RWPE1 (cell line): ENCODE measurements at regions of chr6 and their contacts with region 1.

Region 1: GRCh38 chr6:42043787-42044475 is 6.4 kb upstream of the TAF8 start:
- DNase-seq: peak; percentile 86
- H3K27ac ChIP-seq: peak overlapping the region; percentile 98
- CTCF ChIP-seq: peak; percentile 90

Region 2: DNA sequence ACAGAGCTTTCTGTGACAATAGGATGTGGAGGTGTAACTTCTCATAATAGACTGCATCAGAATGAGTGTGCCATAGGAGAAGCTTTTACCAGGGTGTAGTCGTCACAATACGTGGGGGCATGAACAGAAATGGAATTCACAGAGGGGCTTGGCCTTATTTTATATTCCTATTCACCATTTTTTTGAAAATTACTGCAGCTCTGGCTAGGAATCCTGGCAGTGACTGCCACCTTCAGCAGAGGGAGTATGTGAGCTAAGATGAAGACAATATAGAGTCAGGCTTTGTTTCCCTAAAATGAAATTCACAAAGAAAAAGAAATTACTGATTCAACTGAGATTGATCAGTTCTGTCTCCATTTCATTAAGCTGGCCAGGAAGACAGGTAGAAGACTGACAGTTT is 242.6 kb before region 1 on chr6:
- CTCF ChIA-PET with region 1: interaction called, 14 read pairs
- POLR2A ChIA-PET with region 1: no interaction called
- DNase-seq: no peak
- H3K27ac ChIP-seq: no peak overlapping the region
- CTCF ChIP-seq: peak; percentile 47

Region 3: GRCh38 chr6:41914869-41915530 is 128.9 kb before region 1 on chr6:
- CTCF ChIA-PET with region 1: no interaction called
- POLR2A ChIA-PET with region 1: no interaction called
- DNase-seq: no peak
- H3K27ac ChIP-seq: peak overlapping the region; percentile 89
- CTCF ChIP-seq: no peak

Region 4: GRCh38 chr6:41941280-41942066 is 102.5 kb before region 1 on chr6 and contains the start of gene CCND3:
- CTCF ChIA-PET with region 1: interaction called, 12 read pairs
- POLR2A ChIA-PET with region 1: no interaction called
- DNase-seq: peak; percentile 85
- H3K27ac ChIP-seq: peak within 1 kb of the TSS; percentile 83
- CTCF ChIP-seq: no peak

Region 5: DNA sequence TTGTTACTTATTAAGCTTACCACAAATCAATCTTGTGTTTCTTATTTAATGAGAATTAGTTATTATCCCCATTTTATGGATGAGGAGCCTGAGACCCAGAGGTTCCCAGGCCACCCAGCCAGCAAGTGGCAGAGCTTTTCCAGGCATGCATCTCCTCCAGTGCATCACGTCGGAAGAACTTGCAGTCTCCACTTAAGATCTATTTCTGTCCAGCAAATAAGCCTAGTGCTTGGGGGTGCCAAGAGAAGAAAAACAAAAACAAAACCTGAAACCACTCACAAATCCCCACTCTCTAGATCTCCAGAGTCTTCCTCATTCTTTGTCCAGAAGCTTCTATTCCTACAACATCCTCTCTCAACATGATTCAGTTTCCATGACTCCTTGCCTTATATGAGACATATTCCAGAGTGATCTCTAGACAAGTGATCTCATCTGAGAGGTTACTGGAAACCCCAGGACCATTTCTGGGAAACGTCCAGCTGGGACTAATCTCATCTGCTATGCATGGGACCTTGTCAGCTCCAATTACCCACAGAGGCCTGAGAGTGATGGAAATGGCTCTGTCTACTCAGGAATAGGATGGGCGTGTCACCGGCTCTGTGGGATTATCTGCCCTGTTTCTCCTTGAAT is 146.7 kb after region 1 on chr6:
- CTCF ChIA-PET with region 1: no interaction called
- POLR2A ChIA-PET with region 1: no interaction called
- DNase-seq: no peak
- H3K27ac ChIP-seq: no peak overlapping the region
- CTCF ChIP-seq: no peak